Motor neuron (in vitro differentiated cells): ENCODE measurements at regions of chr17 and their contacts with region 1.

Region 1: GRCh38 chr17:74873038-74873873 is 462 bp upstream of the FDXR start:
- ATAC-seq: peak; percentile 89 to 95 (median 93)
- H3K4me3 ChIP-seq: peak overlapping the region; percentile 50 to 85 (median 60)
- H3K27ac ChIP-seq: peak overlapping the region; percentile 57 to 58
- H3K4me1 ChIP-seq: peaks cover 4 to 6% of the 10 kb centered on the region in 2 donors

Region 2: DNA sequence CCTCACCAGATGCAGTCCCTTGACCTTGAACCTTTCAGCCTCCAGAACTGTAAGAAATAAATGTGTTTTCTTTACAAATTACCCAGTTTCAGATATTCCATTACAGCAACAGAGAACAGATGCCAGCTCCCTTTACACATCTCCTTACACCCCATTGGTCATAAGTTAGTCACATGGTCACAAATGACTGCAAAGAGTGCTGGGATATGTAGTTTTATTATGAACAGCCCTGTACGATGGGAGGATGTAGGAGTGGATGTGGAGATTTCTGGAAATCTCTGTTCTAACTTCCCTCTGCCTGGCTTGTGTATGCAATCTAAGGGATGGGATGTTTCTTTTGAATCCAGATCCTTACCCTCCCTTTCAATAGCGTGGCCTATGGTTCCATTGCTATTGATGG is 683.1 kb before region 1 on chr17:
- in situ Hi-C with region 1: no loop called
- ATAC-seq: peak; percentile 24 to 88 (median 82)
- H3K4me3 ChIP-seq: no peak overlapping the region
- H3K27ac ChIP-seq: no peak overlapping the region
- H3K4me1 ChIP-seq: peaks cover 41 to 42% of the 10 kb centered on the region in 2 donors

Region 3: GRCh38 chr17:74770498-74771318 is 102.5 kb before region 1 on chr17:
- in situ Hi-C with region 1: loop called in 1 of 9 experiments (anchors 25 kb)
- ATAC-seq: peak; percentile 57 to 93 (median 66)
- H3K4me3 ChIP-seq: no peak overlapping the region
- H3K27ac ChIP-seq: no peak overlapping the region
- H3K4me1 ChIP-seq: peaks cover 8% of the 10 kb centered on the region in 2 donors